ENCODE measurements at regions of chr4 and their contacts with region 1.

Region 1: DNA sequence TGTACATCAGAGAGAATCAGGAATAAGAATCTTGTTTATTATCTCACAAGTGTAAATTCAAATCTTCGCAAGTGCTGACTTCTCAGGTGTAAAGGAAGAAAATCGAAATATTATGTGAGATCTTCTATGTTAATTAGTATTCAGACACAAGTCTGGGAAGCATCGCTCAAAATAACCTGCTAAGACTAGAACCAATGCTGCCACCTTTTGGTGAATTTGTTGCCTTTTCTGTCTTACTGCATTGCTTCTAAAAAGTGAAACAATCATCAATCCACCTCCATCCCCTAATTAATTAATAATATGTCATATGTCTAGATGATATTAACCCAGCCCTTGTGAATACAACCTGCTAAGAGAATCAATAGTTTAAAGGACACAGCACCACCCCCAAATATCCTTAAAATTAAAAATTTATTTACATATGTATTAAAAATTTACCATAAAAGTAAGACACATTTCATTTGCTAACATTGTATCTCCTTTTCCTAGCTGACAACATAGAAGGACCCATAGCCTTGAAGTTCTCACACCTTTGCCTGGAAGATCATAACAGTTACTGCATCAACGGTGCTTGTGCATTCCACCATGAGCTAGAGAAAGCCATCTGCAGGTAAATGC is 3.5 kb downstream of the EPGN start:
- DNase-seq: peak in 1 of 2 donors; percentile 67
- ATAC-seq: no peak
- H3K4me3 ChIP-seq: no peak overlapping the region
- H3K4me3 Mint-ChIP-seq: no peak overlapping the region
- H3K27ac ChIP-seq: no peak overlapping the region
- H3K27ac Mint-ChIP-seq: no peak overlapping the region
- H3K4me1 ChIP-seq: no peaks in the 10 kb centered on the region
- H3K4me1 Mint-ChIP-seq: peaks cover 0 to 4% of the 10 kb centered on the region in 2 donors
- H3K27me3 ChIP-seq: no peaks in the 10 kb centered on the region
- H3K27me3 Mint-ChIP-seq: peaks cover 0 to 7% of the 10 kb centered on the region in 2 donors
- CTCF ChIP-seq: peak; percentile 32

Region 2: GRCh38 chr4:73776321-73776729 is 535.5 kb before region 1 on chr4:
- intact Hi-C with region 1: no loop called
- DNase-seq: no peak
- ATAC-seq: no peak
- H3K4me3 ChIP-seq: no peak overlapping the region
- H3K4me3 Mint-ChIP-seq: no peak overlapping the region
- H3K27ac ChIP-seq: no peak overlapping the region
- H3K27ac Mint-ChIP-seq: no peak overlapping the region
- H3K4me1 ChIP-seq: no peaks in the 10 kb centered on the region
- H3K4me1 Mint-ChIP-seq: no peaks in the 10 kb centered on the region
- H3K27me3 ChIP-seq: no peaks in the 10 kb centered on the region
- H3K27me3 Mint-ChIP-seq: no peaks in the 10 kb centered on the region
- CTCF ChIP-seq: no peak

Region 3: DNA sequence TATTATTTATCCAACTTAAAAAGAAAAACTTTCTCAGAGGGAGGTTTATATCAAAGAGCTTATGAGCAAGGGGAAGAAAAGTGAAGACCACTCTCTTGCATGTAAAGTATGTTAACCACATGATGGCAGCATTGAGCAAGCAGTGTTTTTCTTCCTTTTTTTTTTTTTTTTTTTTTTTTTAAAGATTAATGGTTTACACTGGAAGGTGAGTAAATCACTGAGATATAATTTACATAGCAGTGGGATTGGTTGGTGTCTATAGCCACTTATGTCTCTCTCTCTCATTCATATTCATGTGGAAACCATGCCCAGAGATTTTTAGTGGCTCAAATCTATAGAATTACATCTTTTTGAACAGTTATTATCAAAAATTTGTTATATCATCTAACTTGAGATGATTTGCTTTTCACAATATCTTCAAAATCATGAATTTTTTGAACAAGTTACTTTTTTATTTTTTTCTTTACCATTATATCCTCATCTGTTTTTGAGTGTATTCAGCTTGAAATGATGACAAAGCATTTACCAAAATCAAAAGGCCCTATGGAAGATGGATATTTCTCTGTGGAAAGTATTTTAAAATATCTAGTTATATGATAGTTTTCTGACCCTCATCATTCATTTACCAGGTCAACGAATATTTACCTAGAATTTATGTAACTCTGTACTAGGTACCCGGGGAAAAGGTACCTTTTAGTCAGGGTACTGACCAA is 122.3 kb before region 1 on chr4:
- intact Hi-C with region 1: loop called (anchors 5 kb)
- DNase-seq: peak in 1 of 2 donors; percentile 73
- ATAC-seq: peak in 2 of 3 donors; percentile 54 to 61
- H3K4me3 ChIP-seq: no peak overlapping the region
- H3K4me3 Mint-ChIP-seq: no peak overlapping the region
- H3K27ac ChIP-seq: no peak overlapping the region
- H3K27ac Mint-ChIP-seq: no peak overlapping the region
- H3K4me1 ChIP-seq: no peaks in the 10 kb centered on the region
- H3K4me1 Mint-ChIP-seq: no peaks in the 10 kb centered on the region
- H3K27me3 ChIP-seq: no peaks in the 10 kb centered on the region
- H3K27me3 Mint-ChIP-seq: no peaks in the 10 kb centered on the region
- CTCF ChIP-seq: peak; percentile 80

Region 4: DNA sequence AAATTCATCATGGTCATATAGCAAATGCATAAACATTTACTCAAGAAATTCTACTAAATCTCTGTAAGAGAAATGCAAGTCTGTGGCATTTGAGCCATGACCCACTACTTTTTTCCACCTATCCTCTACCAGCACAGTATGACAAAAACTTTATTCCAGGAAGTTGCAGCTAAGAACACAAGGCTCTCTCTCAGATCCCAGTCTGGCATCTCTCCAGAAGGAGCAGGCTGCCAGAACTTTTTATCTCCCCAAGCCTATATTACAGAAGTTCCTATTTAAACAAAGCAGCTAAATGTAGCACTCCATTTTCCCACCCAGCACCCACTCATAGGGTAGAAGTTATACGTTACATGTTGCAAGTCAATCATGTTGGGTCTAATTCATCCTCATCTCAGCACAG is 52.8 kb before region 1 on chr4:
- intact Hi-C with region 1: no loop called
- DNase-seq: no peak
- ATAC-seq: no peak
- H3K4me3 ChIP-seq: no peak overlapping the region
- H3K4me3 Mint-ChIP-seq: no peak overlapping the region
- H3K27ac ChIP-seq: no peak overlapping the region
- H3K27ac Mint-ChIP-seq: no peak overlapping the region
- H3K4me1 ChIP-seq: no peaks in the 10 kb centered on the region
- H3K4me1 Mint-ChIP-seq: no peaks in the 10 kb centered on the region
- H3K27me3 ChIP-seq: no peaks in the 10 kb centered on the region
- H3K27me3 Mint-ChIP-seq: no peaks in the 10 kb centered on the region
- CTCF ChIP-seq: no peak

Measured in natural killer cell (primary cell).